ENCODE measurements at regions of chr17 and their contacts with region 1.

Region 1: DNA sequence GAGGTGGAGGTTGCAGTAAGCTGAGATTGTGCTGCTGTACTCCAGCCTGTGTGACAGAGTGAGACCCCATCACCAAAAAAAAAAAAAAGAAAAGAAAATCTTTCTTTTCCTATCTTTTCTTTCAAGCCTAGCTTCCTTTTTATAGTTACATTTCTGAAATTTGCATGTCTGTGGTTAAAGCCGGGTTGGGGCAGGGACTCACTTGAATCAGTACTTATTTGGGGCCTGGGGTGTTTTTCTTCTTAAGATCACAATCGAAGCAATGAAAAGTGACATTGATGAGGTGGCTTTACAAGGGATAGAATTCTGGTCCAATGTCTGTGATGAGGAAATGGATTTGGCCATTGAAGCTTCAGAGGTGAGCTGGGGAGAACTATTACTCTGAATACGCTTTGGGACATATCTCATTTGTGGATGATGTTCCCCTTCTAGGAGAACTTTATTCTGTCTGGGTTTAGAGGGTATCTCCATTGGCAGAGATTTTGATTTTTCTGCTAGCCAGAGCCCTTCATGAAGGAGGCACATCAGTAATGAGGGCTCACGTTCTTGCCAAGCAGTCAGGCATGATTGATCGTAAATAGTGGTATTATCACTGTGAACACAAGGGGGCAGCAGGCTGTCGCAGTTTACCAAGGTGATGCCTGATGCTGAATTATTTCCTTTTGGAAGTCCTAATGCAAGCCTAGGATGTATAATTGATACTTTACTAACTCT is 14.3 kb downstream of the KPNB1 start:
- DNase-seq: peak in 1 of 2 experiments; percentile 73
- H3K4me3 ChIP-seq: no peak overlapping the region
- H3K27ac ChIP-seq: no peak overlapping the region
- H3K4me1 ChIP-seq: peaks cover 0 to 10% (median 7%) of the 10 kb centered on the region in 4 experiments; a peak in 3 of 7 replicates
- H3K27me3 ChIP-seq: no peaks in the 10 kb centered on the region
- CTCF ChIP-seq: peak; percentile 56 to 92 (median 65)
- EP300 ChIP-seq: no peak
- POLR2A ChIP-seq: no peak
- RAD21 ChIP-seq: peak; percentile 50 to 58

Region 2: DNA sequence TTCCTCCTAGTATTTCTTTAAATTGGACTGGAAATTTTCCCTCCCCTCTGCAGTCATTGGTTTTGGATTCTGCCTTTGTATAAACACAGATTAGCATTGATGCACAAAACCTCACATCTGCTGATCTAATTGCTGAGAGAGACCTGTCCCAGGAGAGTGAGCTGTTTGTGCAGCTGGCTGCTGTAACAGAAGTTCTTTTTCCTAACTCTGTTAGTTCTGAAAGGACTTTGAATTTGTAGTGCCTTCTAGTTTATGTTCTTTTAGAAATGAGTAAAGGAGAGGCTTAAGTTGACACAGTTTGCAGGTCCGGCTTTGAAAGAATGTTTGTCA is 59.5 kb before region 1 on chr17:
- CTCF ChIA-PET with region 1: no interaction called
- POLR2A ChIA-PET with region 1: no interaction called
- DNase-seq: no peak
- H3K4me3 ChIP-seq: no peak overlapping the region
- H3K27ac ChIP-seq: no peak overlapping the region
- H3K4me1 ChIP-seq: no peaks in the 10 kb centered on the region
- H3K27me3 ChIP-seq: no peaks in the 10 kb centered on the region
- CTCF ChIP-seq: no peak
- EP300 ChIP-seq: no peak
- POLR2A ChIP-seq: no peak
- RAD21 ChIP-seq: no peak

Region 3: DNA sequence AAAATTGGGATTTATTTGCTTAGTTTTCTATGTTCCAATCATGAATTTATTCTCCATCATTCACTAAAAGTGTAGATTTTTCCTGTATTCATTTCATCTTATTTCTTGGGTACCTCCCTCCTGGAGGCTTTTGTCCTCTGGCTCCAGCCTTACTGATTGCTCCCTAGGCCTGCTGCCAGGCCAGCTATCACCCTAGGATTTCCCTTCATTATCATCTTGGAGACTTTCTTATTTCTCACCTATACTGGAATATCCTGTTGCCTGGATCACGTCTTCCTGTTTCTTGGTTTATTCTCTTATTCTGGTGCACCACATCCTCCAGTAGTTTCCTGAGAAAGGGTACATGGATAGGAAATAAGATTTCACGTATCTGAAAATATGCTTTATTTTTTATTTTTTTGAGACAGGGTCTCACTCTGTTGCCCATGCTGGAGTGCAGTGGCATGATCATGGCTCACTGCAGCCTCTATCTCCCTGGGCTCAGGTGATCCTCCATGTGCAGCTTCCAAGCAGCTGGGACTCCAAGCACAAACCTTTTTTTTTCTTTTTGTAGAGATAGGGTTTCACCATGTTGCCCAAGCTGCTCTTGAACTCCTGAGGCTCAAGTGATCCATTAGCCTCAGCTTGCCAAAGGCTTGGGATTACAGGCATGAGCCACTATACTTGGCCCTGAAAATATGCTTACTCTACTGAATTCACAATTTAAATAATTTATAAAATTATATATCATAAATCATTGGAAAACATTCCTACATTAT is 27.6 kb before region 1 on chr17:
- CTCF ChIA-PET with region 1: no interaction called
- POLR2A ChIA-PET with region 1: no interaction called
- DNase-seq: no peak
- H3K4me3 ChIP-seq: no peak overlapping the region
- H3K27ac ChIP-seq: no peak overlapping the region
- H3K4me1 ChIP-seq: no peaks in the 10 kb centered on the region
- H3K27me3 ChIP-seq: no peaks in the 10 kb centered on the region
- CTCF ChIP-seq: no peak
- EP300 ChIP-seq: no peak
- POLR2A ChIP-seq: no peak
- RAD21 ChIP-seq: no peak

Region 4: GRCh38 chr17:47649153-47649971 is 14.7 kb before region 1 on chr17 and contains the start of gene KPNB1:
- CTCF ChIA-PET with region 1: interaction called, 28 read pairs
- POLR2A ChIA-PET with region 1: interaction called, 1,575 read pairs
- DNase-seq: peak; percentile 96 to 99
- H3K4me3 ChIP-seq: peak within 1 kb of the TSS; percentile 79 to 99 (median 93)
- H3K27ac ChIP-seq: peak within 1 kb of the TSS; percentile 83
- H3K4me1 ChIP-seq: peaks cover 0 to 6% (median 4%) of the 10 kb centered on the region in 4 experiments; a peak in 5 of 7 replicates
- H3K27me3 ChIP-seq: no peaks in the 10 kb centered on the region
- CTCF ChIP-seq: no peak
- EP300 ChIP-seq: peak; percentile 10 to 79; a peak in 2 of 3 replicates
- POLR2A ChIP-seq: peak; percentile 3 to 81
- RAD21 ChIP-seq: no peak
- total RNA-seq, gene KPNB1: 625 and 635 TPM in 2 replicates

Region 5: DNA sequence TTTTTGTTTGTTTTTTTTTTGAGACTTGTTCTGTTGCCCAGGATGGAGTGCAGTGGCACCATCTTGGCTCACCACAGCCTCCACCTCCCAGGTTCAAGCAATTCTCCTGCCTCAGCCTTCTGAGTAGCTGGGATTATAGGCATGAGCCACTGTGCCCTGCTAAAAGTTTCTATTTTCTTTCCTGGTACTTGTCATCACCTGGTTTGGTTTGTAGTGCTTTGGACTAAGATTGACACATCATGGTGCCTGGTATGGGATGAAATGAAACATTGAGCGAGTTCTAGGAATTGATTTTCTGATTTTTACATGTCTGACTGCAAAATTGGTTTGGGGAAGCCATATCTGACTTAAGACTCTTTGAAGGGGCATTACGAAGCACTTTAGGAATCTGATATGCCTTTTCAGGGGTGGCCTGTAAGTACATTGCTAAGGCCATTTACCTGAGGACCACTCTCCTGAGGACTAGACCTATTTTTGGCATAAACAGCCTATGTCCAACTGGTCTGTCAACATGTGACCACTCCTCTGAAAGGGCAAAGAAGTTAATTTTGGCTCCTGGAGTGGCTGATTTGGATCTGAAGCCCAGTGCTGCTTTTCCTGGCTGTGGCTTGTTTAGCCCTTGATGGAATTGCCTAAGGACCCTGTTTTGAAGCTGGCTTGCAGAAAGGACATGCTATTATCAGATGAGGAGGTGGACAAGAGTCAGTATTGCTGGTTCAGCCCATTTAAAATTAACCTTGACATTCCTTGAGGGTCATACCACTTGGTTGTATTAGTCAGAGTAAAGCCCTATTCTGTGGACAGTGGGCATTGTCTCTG is 11.5 kb after region 1 on chr17:
- CTCF ChIA-PET with region 1: interaction called, 107 read pairs
- POLR2A ChIA-PET with region 1: interaction called, 1,575 read pairs
- DNase-seq: no peak
- H3K4me3 ChIP-seq: no peak overlapping the region
- H3K27ac ChIP-seq: no peak overlapping the region
- H3K4me1 ChIP-seq: no peaks in the 10 kb centered on the region
- H3K27me3 ChIP-seq: no peaks in the 10 kb centered on the region; a peak in 1 of 7 replicates
- CTCF ChIP-seq: no peak
- EP300 ChIP-seq: no peak
- POLR2A ChIP-seq: peak in 1 of 2 experiments; percentile 10; a peak in 2 of 3 replicates
- RAD21 ChIP-seq: no peak

Region 6: DNA sequence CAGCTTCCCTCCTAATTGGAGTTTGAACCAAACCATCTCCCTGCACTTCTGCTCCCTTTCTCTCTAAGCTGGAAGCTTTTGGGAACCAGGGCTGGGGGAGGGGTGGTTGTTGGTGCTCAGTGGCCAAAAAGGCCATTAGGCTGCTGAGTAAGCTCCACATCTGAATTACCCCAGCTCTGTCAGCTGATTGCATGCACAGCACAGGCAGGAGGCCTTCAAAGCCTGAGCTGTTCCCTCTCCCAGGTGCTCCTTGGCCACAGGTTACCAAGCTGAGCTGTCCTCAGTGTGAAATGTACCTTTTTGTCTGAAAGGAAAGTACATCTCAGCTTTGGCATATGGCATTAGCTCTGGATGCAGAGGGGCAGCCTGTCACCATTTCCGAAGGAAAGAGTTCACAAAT is 23.7 kb after region 1 on chr17:
- CTCF ChIA-PET with region 1: interaction called, 107 read pairs
- POLR2A ChIA-PET with region 1: interaction called, 1,575 read pairs
- DNase-seq: peak in 1 of 2 experiments; percentile 63
- H3K4me3 ChIP-seq: no peak overlapping the region
- H3K27ac ChIP-seq: no peak overlapping the region
- H3K4me1 ChIP-seq: peaks cover 10 to 16% (median 13%) of the 10 kb centered on the region in 4 experiments
- H3K27me3 ChIP-seq: no peaks in the 10 kb centered on the region
- CTCF ChIP-seq: no peak
- EP300 ChIP-seq: no peak
- POLR2A ChIP-seq: 0 out of 3 replicates have a peak, but pooled peaks of 1 of the 2 experiments have one; percentile 32
- RAD21 ChIP-seq: 0 out of 4 replicates have a peak, but pooled peaks of 1 of the 2 experiments have one; percentile 2

Region 7: GRCh38 chr17:47692895-47693733 is 29.0 kb after region 1 on chr17:
- CTCF ChIA-PET with region 1: interaction called, 19 read pairs
- POLR2A ChIA-PET with region 1: interaction called, 1,575 read pairs
- DNase-seq: no peak
- H3K4me3 ChIP-seq: peak overlapping the region; percentile 26 to 82 (median 56)
- H3K27ac ChIP-seq: peak overlapping the region; percentile 67; the same call in 1 of the 2 replicates
- H3K4me1 ChIP-seq: peaks cover 10 to 22% (median 20%) of the 10 kb centered on the region in 4 experiments
- H3K27me3 ChIP-seq: no peaks in the 10 kb centered on the region; a peak in 1 of 7 replicates
- CTCF ChIP-seq: no peak
- EP300 ChIP-seq: no peak
- POLR2A ChIP-seq: no peak
- RAD21 ChIP-seq: no peak

Region 8: DNA sequence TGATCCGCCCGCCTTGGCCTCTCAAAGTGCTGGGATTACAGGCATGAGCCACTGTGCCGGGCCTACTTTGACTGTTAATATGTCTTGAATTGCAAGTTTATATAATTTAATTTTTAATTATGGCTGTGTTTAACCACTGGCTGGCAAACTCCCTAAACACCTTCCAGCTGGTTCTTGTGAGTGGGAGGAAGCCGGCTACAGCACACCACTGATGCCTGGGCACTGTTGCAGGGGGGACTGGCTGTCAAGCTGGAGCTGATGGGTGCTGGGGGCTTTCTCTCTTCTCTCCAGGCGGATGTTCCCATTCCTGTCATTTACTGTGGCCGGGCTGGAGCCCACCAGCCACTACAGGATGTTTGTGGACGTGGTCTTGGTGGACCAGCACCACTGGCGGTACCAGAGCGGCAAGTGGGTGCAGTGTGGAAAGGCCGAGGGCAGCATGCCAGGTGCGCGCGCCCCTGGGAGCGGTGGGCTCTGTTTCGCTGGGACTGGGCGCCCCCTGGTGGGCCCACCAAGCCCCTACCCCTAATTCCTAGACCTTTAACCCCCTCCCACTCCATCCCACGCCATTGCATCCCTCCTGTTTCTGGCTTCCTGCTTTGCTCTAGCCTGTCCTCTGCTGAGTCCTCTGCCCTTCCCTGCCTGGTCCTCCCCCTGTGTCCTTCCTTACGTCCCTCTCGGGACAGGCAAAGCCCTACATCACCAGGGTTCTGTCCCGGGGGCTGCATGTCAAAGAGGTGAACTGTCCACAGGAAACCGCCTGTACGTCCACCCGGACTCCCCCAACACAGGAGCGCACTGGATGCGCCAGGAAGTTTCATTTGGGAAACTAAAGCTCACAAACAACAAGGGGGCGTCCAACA is 78.5 kb after region 1 on chr17:
- CTCF ChIA-PET with region 1: interaction called, 17 read pairs
- POLR2A ChIA-PET with region 1: interaction called, 4 read pairs
- DNase-seq: peak in 1 of 2 experiments; percentile 89
- H3K4me3 ChIP-seq: no peak overlapping the region
- H3K27ac ChIP-seq: no peak overlapping the region
- H3K4me1 ChIP-seq: peaks cover 0 to 5% (median 2%) of the 10 kb centered on the region in 4 experiments; a peak in 2 of 7 replicates
- H3K27me3 ChIP-seq: 0 out of 7 replicates have a peak, but pooled peaks cover 0 to 2% (median 0%) of the 10 kb centered on the region in 4 experiments
- CTCF ChIP-seq: peak; percentile 82 to 85 (median 84)
- EP300 ChIP-seq: no peak
- POLR2A ChIP-seq: no peak
- RAD21 ChIP-seq: peak; percentile 87 to 92

Measured in H1 (cell line).